Activated CD4-positive, alpha-beta T cell treated with anti-CD3 and anti-CD28 coated beads for 36 hours (primary cell): ENCODE measurements at regions of chr10 and their contacts with region 1.

Region 1: DNA sequence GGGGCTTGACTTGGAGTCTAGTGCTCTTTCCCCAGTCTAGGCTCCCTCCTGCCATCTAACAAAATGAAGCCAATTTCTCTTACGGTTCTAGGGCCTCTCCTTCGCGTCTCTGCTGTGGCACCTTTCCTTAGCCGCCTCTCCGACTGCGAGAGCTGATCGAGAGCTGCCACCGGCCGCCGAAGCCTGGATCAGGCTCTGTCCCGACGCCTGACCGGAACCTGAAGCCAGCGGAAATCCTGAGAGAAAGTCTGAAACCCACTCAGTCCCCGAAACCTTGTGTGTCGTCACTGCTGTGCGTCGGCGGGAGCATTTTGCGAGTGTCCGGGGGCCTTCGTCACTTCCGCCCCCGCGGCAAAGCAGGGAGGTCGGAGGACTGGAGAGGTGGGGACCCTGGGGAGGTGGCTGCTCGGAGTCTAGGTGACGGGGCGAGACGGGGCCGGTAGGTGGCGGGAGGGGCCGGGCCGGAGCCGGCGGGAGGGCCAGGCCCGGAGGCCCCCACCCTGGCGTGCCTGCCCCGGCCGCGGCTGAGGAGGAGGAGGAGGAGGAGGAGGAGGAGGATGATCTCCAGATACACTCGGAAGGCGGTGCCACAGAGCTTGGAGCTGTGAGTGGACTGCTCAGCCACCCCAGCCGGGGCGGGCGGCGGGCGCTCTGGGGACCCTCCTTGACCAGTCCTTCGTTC is at the starts of genes ECD and FAM149B1:
- DNase-seq: peak; percentile 96
- ATAC-seq: peak; percentile 94
- H3K4me3 Mint-ChIP-seq: peak within 1 kb of the TSS; percentile 100
- H3K27ac Mint-ChIP-seq: peak within 1 kb of the TSS; percentile 100
- H3K4me1 Mint-ChIP-seq: peaks cover 37% of the 10 kb centered on the region
- H3K27me3 Mint-ChIP-seq: no peaks in the 10 kb centered on the region
- total RNA-seq, gene ECD: 41.0 to 50.7 TPM
- total RNA-seq, gene FAM149B1: 16.0 to 18.6 TPM

Region 2: DNA sequence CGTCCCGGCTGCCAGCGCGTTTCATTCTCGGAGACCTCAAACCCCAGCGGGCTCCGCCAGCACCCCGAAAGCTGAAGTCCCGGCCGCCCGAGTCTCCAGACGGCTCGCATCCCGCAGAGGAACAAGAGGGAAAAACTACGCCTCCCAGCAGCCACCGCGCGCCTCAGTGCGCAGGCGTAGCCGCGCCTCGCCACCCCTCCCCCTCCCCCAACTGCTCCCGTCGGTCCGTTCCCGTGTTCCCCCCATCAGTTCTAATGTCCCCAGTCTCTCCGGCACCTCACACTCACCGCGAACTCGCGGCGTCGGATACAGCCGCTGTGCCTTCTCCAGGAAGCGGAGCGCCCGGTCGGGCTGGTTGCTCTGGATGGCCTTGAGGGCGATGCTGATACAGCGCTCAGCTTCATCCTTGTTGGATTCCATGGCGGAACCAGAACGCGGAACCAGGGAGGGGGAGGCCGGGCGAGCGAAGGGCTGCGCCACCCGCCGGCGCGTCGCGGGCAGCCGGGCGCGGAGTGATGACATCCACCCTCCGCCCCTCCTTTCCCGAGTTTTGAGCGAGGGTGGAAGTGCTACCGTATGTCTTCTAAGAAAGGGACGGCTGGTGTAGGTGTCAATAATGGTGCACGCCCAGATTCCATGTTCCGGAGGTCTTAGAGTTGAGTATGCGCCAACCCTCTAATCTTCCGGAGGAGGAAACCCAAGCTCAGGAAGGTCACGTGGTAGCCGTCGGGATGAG is 813.3 kb before region 1 on chr10 and contains the start of gene DNAJB12:
- CTCF ChIA-PET with region 1: no interaction called
- POLR2A ChIA-PET with region 1: no interaction called
- intact Hi-C with region 1: loop called in 1 of 2 experiments (anchors 2 kb)
- DNase-seq: peak; percentile 93
- ATAC-seq: peak; percentile 83
- H3K4me3 Mint-ChIP-seq: peak within 1 kb of the TSS; percentile 82
- H3K27ac Mint-ChIP-seq: peak within 1 kb of the TSS; percentile 98
- H3K4me1 Mint-ChIP-seq: peaks cover 35% of the 10 kb centered on the region
- H3K27me3 Mint-ChIP-seq: no peaks in the 10 kb centered on the region
- total RNA-seq, gene DNAJB12: 19.7 to 21.9 TPM

Region 3: GRCh38 chr10:72692057-72692910 is 475.6 kb before region 1 on chr10 and contains the start of gene MCU:
- CTCF ChIA-PET with region 1: no interaction called
- POLR2A ChIA-PET with region 1: no interaction called
- intact Hi-C with region 1: loop called in 1 of 2 experiments (anchors 5 kb)
- DNase-seq: peak; percentile 96
- ATAC-seq: peak; percentile 98
- H3K4me3 Mint-ChIP-seq: peak within 1 kb of the TSS; percentile 77
- H3K27ac Mint-ChIP-seq: peak within 1 kb of the TSS; percentile 75
- H3K4me1 Mint-ChIP-seq: peaks cover 40% of the 10 kb centered on the region
- H3K27me3 Mint-ChIP-seq: no peaks in the 10 kb centered on the region
- total RNA-seq, gene MCU: 15.1 to 16.0 TPM

Region 4: DNA sequence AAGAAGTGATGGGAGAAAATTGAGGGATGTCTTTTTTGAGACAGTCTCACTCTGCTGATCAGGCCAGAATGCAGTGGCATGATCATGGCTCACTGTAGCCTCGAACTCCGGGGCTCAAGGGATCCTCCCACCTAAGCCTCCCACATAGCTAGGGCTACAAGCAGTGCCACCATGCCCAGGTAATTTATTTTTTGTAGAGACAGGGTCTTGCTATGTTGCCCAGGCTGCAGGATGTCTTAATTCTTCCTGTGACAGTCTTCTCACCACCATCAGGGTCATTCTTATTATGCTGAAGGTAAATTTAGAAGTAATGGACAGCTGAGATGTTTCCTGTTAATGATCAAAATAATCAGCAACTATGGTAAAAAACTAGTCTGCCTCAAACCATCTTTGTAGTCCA is 72.0 kb after region 1 on chr10:
- CTCF ChIA-PET with region 1: no interaction called
- POLR2A ChIA-PET with region 1: no interaction called
- intact Hi-C with region 1: no loop called
- DNase-seq: no peak
- ATAC-seq: no peak
- H3K4me3 Mint-ChIP-seq: no peak overlapping the region
- H3K27ac Mint-ChIP-seq: no peak overlapping the region
- H3K4me1 Mint-ChIP-seq: peaks cover 22% of the 10 kb centered on the region
- H3K27me3 Mint-ChIP-seq: no peaks in the 10 kb centered on the region

Region 5: GRCh38 chr10:73252445-73253224 is 84.7 kb after region 1 on chr10 and contains the start of gene MRPS16:
- CTCF ChIA-PET with region 1: no interaction called
- POLR2A ChIA-PET with region 1: no interaction called
- intact Hi-C with region 1: loop called (anchors 1 kb)
- DNase-seq: peak; percentile 95
- ATAC-seq: peak; percentile 84
- H3K4me3 Mint-ChIP-seq: peak within 1 kb of the TSS; percentile 94
- H3K27ac Mint-ChIP-seq: peak within 1 kb of the TSS; percentile 98
- H3K4me1 Mint-ChIP-seq: peaks cover 32% of the 10 kb centered on the region
- H3K27me3 Mint-ChIP-seq: no peaks in the 10 kb centered on the region
- total RNA-seq, gene MRPS16: 123 to 138 TPM

Region 6: DNA sequence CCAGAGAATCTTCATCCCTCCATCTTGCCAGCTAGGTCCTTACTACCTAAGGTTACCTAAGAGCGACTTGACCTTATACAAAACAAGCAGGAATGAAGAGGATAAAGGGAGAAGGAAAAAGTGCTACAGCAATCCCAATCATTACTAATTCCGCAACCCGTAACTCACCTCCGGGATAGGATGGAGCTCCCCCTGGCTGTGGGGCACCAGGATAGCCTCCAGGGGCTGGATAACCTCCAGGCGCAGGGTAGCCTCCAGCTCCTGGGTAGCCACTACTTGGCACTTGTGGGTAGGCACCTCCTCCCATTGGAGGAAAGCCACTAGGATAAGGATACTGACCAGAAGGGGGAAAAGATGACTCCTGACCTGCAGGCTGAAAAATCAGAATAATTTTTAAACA is 230.1 kb after region 1 on chr10:
- CTCF ChIA-PET with region 1: no interaction called
- POLR2A ChIA-PET with region 1: no interaction called
- intact Hi-C with region 1: no loop called
- DNase-seq: no peak
- ATAC-seq: no peak
- H3K4me3 Mint-ChIP-seq: no peak overlapping the region
- H3K27ac Mint-ChIP-seq: no peak overlapping the region
- H3K4me1 Mint-ChIP-seq: peaks cover 3% of the 10 kb centered on the region
- H3K27me3 Mint-ChIP-seq: no peaks in the 10 kb centered on the region

Region 7: DNA sequence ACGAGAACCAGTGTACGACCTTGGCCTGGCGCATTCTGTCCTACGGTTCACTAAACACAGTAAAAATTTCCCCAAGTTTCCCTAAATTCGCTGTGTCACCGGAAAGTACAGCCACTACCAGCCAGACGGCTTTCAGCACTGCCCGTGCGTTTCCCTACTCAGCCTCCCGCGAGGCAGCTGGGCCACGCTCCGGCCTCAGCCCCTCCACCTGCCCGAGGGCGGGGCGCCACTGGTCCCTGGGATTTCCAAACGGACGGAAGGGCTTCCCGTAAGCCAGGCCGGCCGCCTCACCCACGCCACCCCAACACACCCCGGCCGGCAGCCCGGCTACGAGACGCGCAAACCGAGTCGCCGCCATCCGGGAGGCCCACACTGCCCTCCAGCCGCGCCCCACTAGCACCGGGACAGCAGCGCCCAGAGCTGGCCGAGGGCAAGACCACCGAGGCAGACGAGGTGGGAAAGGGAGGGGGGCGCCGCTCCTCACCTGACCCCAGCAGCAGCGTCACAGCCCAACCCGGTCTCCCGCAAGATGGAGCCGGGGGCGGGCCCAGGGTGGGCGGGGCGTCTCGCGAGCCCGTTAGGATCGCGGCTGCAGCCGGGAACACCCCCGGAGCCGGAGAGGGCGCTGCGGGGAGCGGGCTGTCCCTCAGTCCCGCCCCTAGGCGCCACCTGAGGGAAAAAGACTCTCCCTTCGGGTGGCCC is 245.8 kb after region 1 on chr10 and contains the start of gene ANXA7:
- CTCF ChIA-PET with region 1: interaction called, 3 read pairs
- POLR2A ChIA-PET with region 1: no interaction called
- intact Hi-C with region 1: loop called in 1 of 2 experiments (anchors 1 kb)
- DNase-seq: peak; percentile 97
- ATAC-seq: peak; percentile 96
- H3K4me3 Mint-ChIP-seq: peak within 1 kb of the TSS; percentile 94
- H3K27ac Mint-ChIP-seq: peak within 1 kb of the TSS; percentile 93
- H3K4me1 Mint-ChIP-seq: peaks cover 52% of the 10 kb centered on the region
- H3K27me3 Mint-ChIP-seq: peaks cover 3% of the 10 kb centered on the region
- total RNA-seq, gene ANXA7: 94.6 to 118 TPM

Region 8: DNA sequence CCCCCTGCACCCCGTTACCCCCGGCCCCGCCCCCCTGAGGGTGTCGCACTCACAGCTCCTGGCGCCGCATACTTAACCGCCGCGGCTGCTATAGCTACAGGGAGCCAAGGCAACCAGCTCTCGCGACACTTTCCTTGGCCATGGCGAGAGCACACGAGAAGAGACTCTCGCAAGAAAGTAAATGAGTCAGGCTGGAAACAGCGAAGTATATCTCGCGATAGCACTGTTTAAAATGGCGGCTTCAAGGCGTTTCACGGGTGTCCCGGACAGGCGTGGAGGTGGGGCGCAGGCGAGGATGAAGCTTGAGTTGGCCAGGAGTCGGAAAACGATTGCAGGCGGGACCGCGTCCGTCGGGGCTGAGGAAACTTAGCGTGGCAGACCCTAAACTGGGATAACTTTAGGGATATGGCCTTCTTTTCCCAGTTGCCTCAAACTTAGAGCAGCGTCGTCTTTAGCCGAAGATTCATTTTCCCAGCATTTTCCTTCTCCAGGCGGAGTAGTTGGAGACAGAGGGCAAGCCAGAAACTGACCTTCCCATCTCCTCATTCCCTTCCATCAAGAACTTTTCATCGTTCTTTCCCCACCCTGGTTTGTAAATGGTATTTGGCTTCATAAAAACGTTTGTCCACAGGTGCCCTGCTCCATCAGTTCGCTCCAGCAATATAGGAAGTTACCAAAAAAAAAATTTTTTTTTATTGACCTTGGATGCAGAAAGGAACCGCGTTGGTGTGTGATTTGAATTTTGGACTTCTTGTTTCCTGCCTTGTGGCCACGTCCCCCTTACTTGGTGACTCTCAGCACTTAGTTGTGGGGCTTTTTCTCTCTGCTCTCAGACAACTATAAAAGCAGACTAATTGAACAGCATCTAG is 458.2 kb after region 1 on chr10:
- CTCF ChIA-PET with region 1: no interaction called
- POLR2A ChIA-PET with region 1: no interaction called
- intact Hi-C with region 1: loop called in 1 of 2 experiments (anchors 1 kb)
- DNase-seq: peak; percentile 97
- ATAC-seq: peak; percentile 99
- H3K4me3 Mint-ChIP-seq: peak overlapping the region; percentile 96
- H3K27ac Mint-ChIP-seq: peak overlapping the region; percentile 98
- H3K4me1 Mint-ChIP-seq: peaks cover 19% of the 10 kb centered on the region
- H3K27me3 Mint-ChIP-seq: no peaks in the 10 kb centered on the region

Region 9: DNA sequence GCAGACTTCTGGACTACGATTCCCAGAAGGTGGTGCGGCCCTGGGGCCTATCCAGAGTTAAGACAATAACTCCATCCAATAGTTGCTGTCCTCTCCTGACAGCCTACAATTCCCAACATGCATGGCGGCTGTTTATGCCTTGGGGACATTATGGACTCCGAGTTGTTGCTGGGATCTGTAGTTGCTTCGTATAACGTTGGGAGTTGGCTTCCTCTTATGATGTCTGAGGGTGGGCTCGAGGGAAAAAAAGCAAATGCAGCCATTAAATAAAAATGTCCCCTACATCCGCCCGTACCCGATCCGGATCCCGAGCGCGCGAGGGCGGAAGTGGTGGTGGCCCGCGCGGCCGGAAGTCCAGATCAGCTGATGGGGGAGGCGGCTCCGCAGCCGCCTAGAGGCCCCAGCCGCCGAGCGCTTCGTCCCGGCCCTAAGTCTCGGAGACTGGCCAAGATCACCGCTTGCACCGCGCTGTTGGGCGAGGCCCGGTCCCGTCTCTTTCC is 617.3 kb after region 1 on chr10 and contains the start of gene ZSWIM8:
- CTCF ChIA-PET with region 1: no interaction called
- POLR2A ChIA-PET with region 1: no interaction called
- intact Hi-C with region 1: loop called in 1 of 2 experiments (anchors 5 kb)
- DNase-seq: peak; percentile 90
- ATAC-seq: peak; percentile 85
- H3K4me3 Mint-ChIP-seq: peak within 1 kb of the TSS; percentile 83
- H3K27ac Mint-ChIP-seq: peak within 1 kb of the TSS; percentile 98
- H3K4me1 Mint-ChIP-seq: peaks cover 46% of the 10 kb centered on the region
- H3K27me3 Mint-ChIP-seq: no peaks in the 10 kb centered on the region
- total RNA-seq, gene ZSWIM8: 40.1 to 67.3 TPM